Ascending aorta (tissue), 2 donors: ENCODE measurements at regions of chr5 and their contacts with region 1.

Region 1: GRCh38 chr5:115888027-115888426 is 46.3 kb downstream of the AP3S1 start:
- DNase-seq: no peak
- H3K4me3 ChIP-seq: no peak overlapping the region
- H3K27ac ChIP-seq: no peak overlapping the region
- H3K4me1 ChIP-seq: no peaks in the 10 kb centered on the region
- H3K27me3 ChIP-seq: no peaks in the 10 kb centered on the region
- CTCF ChIP-seq: peak in 1 of 3 experiments; percentile 28

Region 2: DNA sequence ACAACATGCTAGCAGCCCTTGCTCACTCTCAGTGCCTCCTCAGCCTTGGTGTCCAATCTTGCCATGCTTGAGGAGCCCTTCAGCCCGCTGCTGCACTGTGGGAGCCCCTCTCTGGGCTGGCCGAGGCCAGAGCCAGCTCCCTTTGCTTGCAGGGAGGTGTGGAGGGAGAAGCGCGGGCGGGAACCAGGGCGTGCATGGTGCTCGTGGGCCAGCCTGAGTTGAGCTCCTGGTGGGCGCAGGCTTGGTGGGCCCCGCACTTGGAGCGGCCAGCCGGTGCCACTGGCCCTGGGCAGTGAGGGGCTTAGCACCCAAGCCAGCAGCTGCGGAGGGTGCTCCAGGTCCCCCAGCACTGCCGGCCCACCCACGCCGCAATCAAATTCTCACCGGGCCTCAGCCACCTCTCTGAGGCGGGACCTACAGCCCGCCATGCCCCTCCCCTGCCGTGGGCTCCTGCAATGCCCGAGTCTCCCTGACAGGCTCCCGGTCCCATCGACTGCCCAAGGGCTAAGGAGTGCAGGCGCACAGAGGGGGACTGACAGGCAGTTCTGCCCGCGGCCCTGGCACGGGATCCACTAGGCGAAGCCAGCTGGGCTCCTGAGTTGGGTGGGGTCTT is 1192.6 kb before region 1 on chr5:
- intact Hi-C with region 1: no loop called
- DNase-seq: no peak
- H3K4me3 ChIP-seq: no peak overlapping the region
- H3K27ac ChIP-seq: no peak overlapping the region
- H3K4me1 ChIP-seq: no peaks in the 10 kb centered on the region
- H3K27me3 ChIP-seq: no peaks in the 10 kb centered on the region
- CTCF ChIP-seq: no peak

Region 3: GRCh38 chr5:116032094-116032517 is 144.1 kb after region 1 on chr5 and contains the start of gene ARL14EPL:
- intact Hi-C with region 1: loop called (anchors 10 kb)
- DNase-seq: peak in 1 of 2 donors; percentile 73
- H3K4me3 ChIP-seq: no peak within 1 kb of the TSS
- H3K27ac ChIP-seq: no peak within 1 kb of the TSS
- H3K4me1 ChIP-seq: no peaks in the 10 kb centered on the region
- H3K27me3 ChIP-seq: no peaks in the 10 kb centered on the region
- CTCF ChIP-seq: peak; percentile 16 to 62 (median 43)
- total RNA-seq, gene ARL14EPL: not detected

Region 4: DNA sequence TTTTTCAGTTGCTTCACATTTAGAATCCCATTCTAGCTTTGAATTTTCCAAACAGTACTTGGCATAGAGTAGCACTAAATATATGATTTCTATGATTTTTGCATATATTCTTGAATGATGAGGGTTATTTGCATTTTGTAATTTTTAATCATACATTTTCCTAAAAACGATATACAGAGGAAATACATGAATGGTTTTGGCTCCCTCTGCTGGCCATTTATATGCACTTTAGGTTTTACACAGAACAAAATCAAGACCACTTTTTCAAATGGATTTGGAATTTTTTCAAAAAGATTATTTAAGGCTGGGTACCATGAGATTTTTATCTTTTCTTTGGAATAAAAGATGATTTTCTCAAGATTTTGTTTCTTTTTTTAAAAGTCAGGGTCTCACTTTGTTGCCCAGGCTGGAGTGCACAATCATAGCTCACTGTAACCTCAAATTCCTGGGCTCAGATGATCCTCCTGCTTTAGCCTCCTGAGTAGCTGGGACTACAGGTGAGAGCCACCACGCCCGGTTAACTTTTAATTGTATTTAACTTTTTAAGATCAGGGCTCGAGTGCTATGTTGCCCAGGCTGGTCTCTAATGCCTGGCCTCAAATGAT is 180.1 kb after region 1 on chr5:
- intact Hi-C with region 1: loop called (anchors 2 kb)
- DNase-seq: no peak
- H3K4me3 ChIP-seq: no peak overlapping the region
- H3K27ac ChIP-seq: no peak overlapping the region
- H3K4me1 ChIP-seq: no peaks in the 10 kb centered on the region
- H3K27me3 ChIP-seq: no peaks in the 10 kb centered on the region
- CTCF ChIP-seq: peak; percentile 39 to 84 (median 77)